ENCODE measurements at regions of chr16 and their contacts with region 1.

Region 1: DNA sequence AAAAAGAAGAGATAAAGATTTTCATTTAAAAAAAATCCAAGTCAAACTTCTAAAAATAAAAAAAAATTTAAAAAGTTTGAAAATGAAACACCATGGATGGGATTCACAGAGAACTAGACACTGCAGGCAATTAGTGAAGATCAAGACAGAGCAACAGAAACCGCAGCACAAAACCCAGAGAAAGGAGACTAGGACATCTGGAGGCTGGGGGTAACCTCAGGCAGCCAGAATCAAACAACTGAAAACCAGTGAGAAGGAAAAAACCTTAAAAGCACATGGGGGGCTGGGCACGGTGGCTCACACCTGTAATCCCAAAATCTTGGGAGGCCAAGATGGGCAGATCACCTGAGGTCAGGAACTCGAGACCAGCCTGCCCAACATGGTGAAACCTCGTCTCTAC is 30.6 kb downstream of the LITAFD start:
- DNase-seq: no peak
- ATAC-seq: no peak
- H3K4me3 ChIP-seq: no peak overlapping the region
- H3K27ac ChIP-seq: no peak overlapping the region
- H3K4me1 ChIP-seq: no peaks in the 10 kb centered on the region
- H3K27me3 ChIP-seq: no peaks in the 10 kb centered on the region
- CTCF ChIP-seq: no peak
- POLR2A ChIP-seq: no peak
- RAD21 ChIP-seq: no peak

Region 2: GRCh38 chr16:8943966-8944759 is 31.4 kb after region 1 on chr16:
- CTCF ChIA-PET with region 1: no interaction called
- POLR2A ChIA-PET with region 1: no interaction called
- dilution Hi-C with region 1: no loop called
- in situ Hi-C with region 1: no loop called
- intact Hi-C with region 1: loop called (anchors 5 kb)
- DNase-seq: no peak
- ATAC-seq: no peak
- H3K4me3 ChIP-seq: no peak overlapping the region
- H3K27ac ChIP-seq: no peak overlapping the region
- H3K4me1 ChIP-seq: peaks cover 2% of the 10 kb centered on the region; the same call in 1 of the 2 replicates
- H3K27me3 ChIP-seq: no peaks in the 10 kb centered on the region
- CTCF ChIP-seq: no peak
- POLR2A ChIP-seq: no peak
- RAD21 ChIP-seq: no peak